A673 (cell line): ENCODE measurements at regions of chr13 and their contacts with region 1.

Region 1: GRCh38 chr13:21998279-21998990 is 327.6 kb downstream of the FGF9 start:
- DNase-seq: no peak
- H3K4me3 ChIP-seq: no peak overlapping the region
- H3K27ac ChIP-seq: no peak overlapping the region
- H3K4me1 ChIP-seq: no peaks in the 10 kb centered on the region
- H3K27me3 ChIP-seq: no peaks in the 10 kb centered on the region
- CTCF ChIP-seq: no peak

Region 2: GRCh38 chr13:22031702-22032286 is 33.4 kb after region 1 on chr13:
- CTCF ChIA-PET with region 1: no interaction called
- POLR2A ChIA-PET with region 1: interaction called, 16 read pairs
- intact Hi-C with region 1: no loop called
- DNase-seq: no peak
- H3K4me3 ChIP-seq: no peak overlapping the region
- H3K27ac ChIP-seq: no peak overlapping the region
- H3K4me1 ChIP-seq: no peaks in the 10 kb centered on the region
- H3K27me3 ChIP-seq: no peaks in the 10 kb centered on the region
- CTCF ChIP-seq: no peak